CD8-positive, alpha-beta T cell (primary cell): ENCODE measurements at regions of chr18 and their contacts with region 1.

Region 1: DNA sequence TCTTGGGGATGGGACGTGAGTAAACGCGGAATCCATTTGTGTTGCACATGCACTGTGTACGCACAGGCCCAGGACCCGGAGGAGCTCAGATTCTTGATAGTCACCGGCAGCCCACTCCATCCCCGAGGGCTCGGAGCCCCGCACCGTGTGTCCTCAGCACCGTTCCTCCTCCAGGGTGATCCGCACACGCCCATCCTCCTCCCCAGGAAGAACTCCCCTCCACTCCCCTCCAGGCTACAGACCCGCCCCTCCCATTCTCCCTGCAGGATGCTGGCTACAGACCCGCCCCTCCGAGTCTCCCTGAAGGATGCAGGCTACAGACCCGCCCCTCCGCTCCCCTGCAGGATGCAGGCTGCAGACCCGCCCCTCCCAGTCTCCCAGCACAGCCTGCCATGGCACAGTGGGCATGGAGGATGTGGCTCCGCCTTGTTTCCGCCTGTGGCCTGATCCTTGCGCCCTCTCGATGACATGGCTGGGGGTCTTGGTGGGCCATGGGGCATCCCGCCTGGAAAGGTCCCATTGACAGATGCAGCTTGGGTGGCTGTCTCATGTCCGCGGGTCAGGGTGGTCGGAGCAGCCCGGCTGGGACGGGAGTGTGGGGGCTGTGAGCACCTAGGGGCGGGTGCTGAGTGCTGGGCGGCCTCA is 14.1 kb downstream of the CTDP1 start:
- DNase-seq: no peak
- ATAC-seq: no peak
- H3K4me3 ChIP-seq: no peak overlapping the region
- H3K4me3 Mint-ChIP-seq: no peak overlapping the region
- H3K27ac ChIP-seq: no peak overlapping the region
- H3K27ac Mint-ChIP-seq: no peak overlapping the region
- H3K4me1 ChIP-seq: peaks cover 7% of the 10 kb centered on the region
- H3K4me1 Mint-ChIP-seq: peaks cover 38% of the 10 kb centered on the region
- H3K27me3 ChIP-seq: no peaks in the 10 kb centered on the region
- H3K27me3 Mint-ChIP-seq: no peaks in the 10 kb centered on the region
- CTCF ChIP-seq: no peak

Region 2: DNA sequence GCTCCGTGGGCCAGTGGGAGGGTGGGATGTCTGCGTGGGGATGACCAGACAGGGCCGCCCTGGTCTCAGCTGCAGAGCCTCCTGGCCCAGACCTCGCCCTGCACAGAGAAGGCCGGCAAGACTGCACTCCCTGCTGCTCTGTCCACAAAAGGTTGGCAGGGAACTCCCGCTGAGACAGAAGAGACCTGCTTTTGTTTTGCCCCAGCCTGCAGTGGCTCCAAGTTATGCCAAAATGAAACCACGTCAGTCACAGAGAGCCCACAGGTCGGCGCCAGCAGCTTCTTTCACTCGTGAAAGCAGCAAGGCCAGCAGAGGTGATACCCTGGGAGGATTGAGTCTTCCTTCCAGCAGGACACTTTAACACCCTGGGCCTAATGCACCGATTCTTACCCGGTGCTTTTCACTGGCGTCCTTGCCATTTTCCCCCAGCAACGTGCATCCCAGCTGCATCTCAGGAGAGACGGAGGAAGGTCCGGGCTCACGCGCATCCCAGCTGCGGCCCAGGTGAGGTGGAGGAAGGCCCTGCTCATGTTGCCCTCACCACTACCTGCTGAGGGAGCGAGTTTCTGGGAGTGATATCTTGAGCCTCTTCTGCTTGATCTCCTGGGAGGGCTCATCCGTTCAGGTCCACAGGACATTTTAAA is 36.2 kb before region 1 on chr18:
- CTCF ChIA-PET with region 1: no interaction called
- POLR2A ChIA-PET with region 1: no interaction called
- intact Hi-C with region 1: no loop called
- DNase-seq: no peak
- ATAC-seq: no peak
- H3K4me3 ChIP-seq: no peak overlapping the region
- H3K4me3 Mint-ChIP-seq: no peak overlapping the region
- H3K27ac ChIP-seq: no peak overlapping the region
- H3K27ac Mint-ChIP-seq: no peak overlapping the region
- H3K4me1 ChIP-seq: no peaks in the 10 kb centered on the region
- H3K4me1 Mint-ChIP-seq: no peaks in the 10 kb centered on the region
- H3K27me3 ChIP-seq: no peaks in the 10 kb centered on the region
- H3K27me3 Mint-ChIP-seq: peaks cover 6% of the 10 kb centered on the region
- CTCF ChIP-seq: no peak

Region 3: DNA sequence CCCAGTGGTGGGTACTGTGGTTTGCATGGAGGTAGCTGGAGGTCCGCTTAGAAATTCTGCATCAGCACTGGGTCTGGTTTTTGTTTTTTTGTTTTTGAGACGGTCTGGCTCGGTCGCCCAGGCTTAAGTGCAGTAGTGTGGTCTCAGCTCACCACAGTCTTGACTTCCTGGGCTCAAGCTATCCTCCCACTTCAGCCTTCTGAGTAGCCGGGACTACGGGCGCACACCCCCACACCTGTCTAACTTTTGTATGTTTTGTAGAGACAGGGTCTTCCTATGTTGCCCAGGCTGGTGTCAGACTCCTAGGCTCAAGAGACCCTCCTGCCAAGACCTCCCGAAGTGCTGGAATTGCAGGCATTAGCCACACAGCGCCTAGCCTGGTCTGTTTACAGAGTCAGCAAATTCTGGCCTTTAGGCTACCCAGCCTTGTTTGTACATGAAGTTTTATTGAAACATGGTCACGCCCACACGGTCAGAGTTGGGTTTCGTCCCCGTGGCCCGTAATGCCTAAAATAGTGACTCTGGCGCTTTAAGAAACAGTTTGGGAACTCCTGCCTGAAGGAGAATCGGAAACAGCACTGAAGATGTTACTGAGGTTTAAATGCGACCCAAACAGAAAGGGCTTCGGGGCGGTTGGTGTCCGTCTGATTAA is 18.6 kb after region 1 on chr18:
- CTCF ChIA-PET with region 1: no interaction called
- POLR2A ChIA-PET with region 1: no interaction called
- intact Hi-C with region 1: loop called in 1 of 2 experiments (anchors 2 kb)
- DNase-seq: no peak
- ATAC-seq: no peak
- H3K4me3 ChIP-seq: no peak overlapping the region
- H3K4me3 Mint-ChIP-seq: no peak overlapping the region
- H3K27ac ChIP-seq: no peak overlapping the region
- H3K27ac Mint-ChIP-seq: no peak overlapping the region
- H3K4me1 ChIP-seq: no peaks in the 10 kb centered on the region
- H3K4me1 Mint-ChIP-seq: peaks cover 7% of the 10 kb centered on the region
- H3K27me3 ChIP-seq: no peaks in the 10 kb centered on the region
- H3K27me3 Mint-ChIP-seq: no peaks in the 10 kb centered on the region
- CTCF ChIP-seq: no peak